ENCODE measurements at regions of chr6 and their contacts with region 1.

Region 1: DNA sequence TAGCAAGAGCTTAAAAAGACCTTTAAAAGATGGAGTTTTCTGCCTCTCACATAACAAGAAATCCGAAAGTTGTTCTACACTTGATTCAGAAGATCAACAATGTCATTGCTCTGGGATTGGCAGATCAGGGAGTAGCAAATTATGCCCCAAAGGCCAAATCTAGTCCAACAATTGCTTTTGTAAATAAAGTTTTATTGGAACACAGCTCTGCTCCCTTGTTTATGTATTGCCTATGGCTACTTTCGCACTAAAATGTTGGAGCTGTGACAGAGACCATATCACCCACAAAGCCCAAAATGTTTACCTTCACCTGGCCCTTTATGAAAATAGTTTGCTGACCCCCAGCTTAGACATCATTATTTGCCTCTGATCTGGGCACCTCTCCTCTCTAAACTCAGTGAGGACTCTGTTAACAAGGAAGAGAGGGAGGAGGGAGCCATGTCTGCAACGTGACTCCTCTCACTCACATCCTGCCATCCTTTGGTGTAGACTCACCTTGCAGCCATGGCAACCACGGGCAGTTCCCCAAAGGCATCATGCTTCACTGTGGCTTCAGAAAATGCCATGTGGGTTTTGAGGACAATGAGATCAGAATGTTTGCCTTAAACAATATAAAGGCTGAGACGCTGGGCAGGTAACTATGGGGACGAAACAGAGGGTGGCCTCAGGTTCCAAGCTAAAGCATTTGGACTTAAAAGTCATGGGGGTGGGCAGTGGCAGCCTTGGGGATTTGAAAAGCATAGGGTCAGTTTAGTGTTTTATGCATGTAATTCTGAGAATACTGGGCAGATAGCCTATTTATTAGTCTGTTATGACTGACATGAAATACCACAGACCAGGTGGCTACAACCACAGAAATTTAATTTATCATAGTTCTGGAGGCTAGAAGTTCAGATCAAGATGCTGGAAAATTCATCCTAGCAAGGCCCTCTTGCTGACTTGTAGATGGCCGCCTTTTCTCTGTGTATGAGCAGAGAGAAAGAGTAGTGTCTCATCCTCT is 149.7 kb upstream of the TNFAIP3 start:
- DNase-seq: peak; percentile 87 to 97 (median 91)
- H3K4me3 ChIP-seq: no peak overlapping the region
- H3K4me3 Mint-ChIP-seq: peak overlapping the region in 7 of 8 donors; percentile 30 to 80 (median 67)
- H3K27ac ChIP-seq: peak overlapping the region; percentile 83
- H3K27ac Mint-ChIP-seq: peak overlapping the region; percentile 93 to 100 (median 99)
- H3K4me1 ChIP-seq: peaks cover 42% of the 10 kb centered on the region
- H3K4me1 Mint-ChIP-seq: peaks cover 37 to 56% (median 46%) of the 10 kb centered on the region in 4 donors
- H3K27me3 ChIP-seq: no peaks in the 10 kb centered on the region
- H3K27me3 Mint-ChIP-seq: no peaks in the 10 kb centered on the region

Region 2: DNA sequence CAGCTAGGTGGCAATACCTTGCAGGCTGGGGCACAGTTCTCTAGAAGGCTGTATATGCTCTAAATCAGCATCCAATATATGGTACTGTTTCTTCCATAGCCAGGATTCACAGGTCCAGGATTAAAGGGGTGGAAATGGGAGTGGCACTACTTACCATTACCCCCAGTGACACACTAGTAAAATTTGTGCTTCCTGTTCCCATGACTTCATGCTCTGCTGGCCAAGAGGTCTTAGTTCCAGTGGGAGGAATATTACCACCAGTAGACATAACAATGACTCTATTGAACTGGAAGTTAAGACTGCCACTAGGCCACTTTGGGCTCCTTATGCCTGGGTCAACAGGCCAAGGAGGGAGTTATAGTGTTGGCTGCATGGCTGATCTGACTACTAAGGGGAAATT is 24.6 kb before region 1 on chr6:
- CTCF ChIA-PET with region 1: no interaction called
- POLR2A ChIA-PET with region 1: no interaction called
- intact Hi-C with region 1: no loop called
- DNase-seq: no peak
- H3K4me3 ChIP-seq: no peak overlapping the region
- H3K4me3 Mint-ChIP-seq: no peak overlapping the region
- H3K27ac ChIP-seq: no peak overlapping the region
- H3K27ac Mint-ChIP-seq: no peak overlapping the region
- H3K4me1 ChIP-seq: no peaks in the 10 kb centered on the region
- H3K4me1 Mint-ChIP-seq: peaks cover 0 to 4% (median 2%) of the 10 kb centered on the region in 4 donors
- H3K27me3 ChIP-seq: no peaks in the 10 kb centered on the region
- H3K27me3 Mint-ChIP-seq: peaks cover 2 to 7% of the 10 kb centered on the region in 2 donors

Region 3: GRCh38 chr6:137736048-137736818 is 18.9 kb after region 1 on chr6:
- CTCF ChIA-PET with region 1: interaction called, 3 read pairs
- POLR2A ChIA-PET with region 1: interaction called, 12 read pairs
- intact Hi-C with region 1: loop called (anchors 1 kb)
- DNase-seq: peak; percentile 45 to 71 (median 51)
- H3K4me3 ChIP-seq: no peak overlapping the region
- H3K4me3 Mint-ChIP-seq: peak overlapping the region in 6 of 8 donors; percentile 10 to 61 (median 48)
- H3K27ac ChIP-seq: peak overlapping the region; percentile 18
- H3K27ac Mint-ChIP-seq: peak overlapping the region; percentile 58 to 97 (median 91)
- H3K4me1 ChIP-seq: peaks cover 16% of the 10 kb centered on the region
- H3K4me1 Mint-ChIP-seq: peaks cover 10 to 14% (median 13%) of the 10 kb centered on the region in 4 donors
- H3K27me3 ChIP-seq: no peaks in the 10 kb centered on the region
- H3K27me3 Mint-ChIP-seq: no peaks in the 10 kb centered on the region

Region 4: DNA sequence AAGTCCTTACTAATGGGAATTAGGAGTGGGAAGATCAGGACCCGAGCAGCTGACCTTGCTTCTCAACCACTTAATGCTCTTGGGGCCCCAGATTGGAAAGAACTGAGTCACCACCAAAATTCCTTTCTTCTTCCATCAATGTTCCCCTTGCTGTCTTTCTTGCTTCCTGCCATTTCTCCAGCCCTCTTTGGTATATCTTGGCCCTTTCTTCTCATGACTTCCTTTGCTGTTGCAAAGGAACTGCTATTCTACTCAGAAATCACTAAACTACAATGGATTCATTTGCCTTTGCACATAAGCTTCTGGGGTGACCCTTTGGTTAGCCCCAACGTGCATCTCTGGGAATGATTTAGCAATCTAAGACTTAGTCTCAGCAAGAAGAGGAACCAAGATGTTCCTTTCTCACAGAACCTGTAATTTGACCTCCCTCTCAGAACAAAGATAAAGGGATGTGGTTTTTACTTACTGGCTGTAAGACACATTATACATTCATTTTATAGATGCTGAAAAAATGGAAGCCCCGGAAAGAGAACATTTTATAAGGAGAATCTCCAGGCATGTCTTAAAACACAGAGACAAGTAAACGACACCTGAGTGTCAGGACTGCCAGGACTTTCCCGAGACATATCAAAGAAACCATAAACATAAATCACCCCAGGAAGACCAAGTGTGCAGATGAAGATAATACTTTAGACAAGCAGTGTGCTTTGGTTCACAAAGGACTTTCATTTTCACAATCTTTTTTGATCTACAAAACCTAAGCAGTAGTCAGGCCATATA is 50.7 kb after region 1 on chr6:
- CTCF ChIA-PET with region 1: no interaction called
- POLR2A ChIA-PET with region 1: interaction called, 3 read pairs
- intact Hi-C with region 1: loop called (anchors 5 kb)
- DNase-seq: peak in 4 of 5 donors; percentile 23 to 42 (median 38)
- H3K4me3 ChIP-seq: no peak overlapping the region
- H3K4me3 Mint-ChIP-seq: peak overlapping the region; percentile 61 to 87 (median 80)
- H3K27ac ChIP-seq: peak overlapping the region; percentile 36
- H3K27ac Mint-ChIP-seq: peak overlapping the region; percentile 74 to 98 (median 96)
- H3K4me1 ChIP-seq: peaks cover 22% of the 10 kb centered on the region
- H3K4me1 Mint-ChIP-seq: peaks cover 11 to 39% (median 18%) of the 10 kb centered on the region in 4 donors
- H3K27me3 ChIP-seq: no peaks in the 10 kb centered on the region
- H3K27me3 Mint-ChIP-seq: no peaks in the 10 kb centered on the region

Region 5: DNA sequence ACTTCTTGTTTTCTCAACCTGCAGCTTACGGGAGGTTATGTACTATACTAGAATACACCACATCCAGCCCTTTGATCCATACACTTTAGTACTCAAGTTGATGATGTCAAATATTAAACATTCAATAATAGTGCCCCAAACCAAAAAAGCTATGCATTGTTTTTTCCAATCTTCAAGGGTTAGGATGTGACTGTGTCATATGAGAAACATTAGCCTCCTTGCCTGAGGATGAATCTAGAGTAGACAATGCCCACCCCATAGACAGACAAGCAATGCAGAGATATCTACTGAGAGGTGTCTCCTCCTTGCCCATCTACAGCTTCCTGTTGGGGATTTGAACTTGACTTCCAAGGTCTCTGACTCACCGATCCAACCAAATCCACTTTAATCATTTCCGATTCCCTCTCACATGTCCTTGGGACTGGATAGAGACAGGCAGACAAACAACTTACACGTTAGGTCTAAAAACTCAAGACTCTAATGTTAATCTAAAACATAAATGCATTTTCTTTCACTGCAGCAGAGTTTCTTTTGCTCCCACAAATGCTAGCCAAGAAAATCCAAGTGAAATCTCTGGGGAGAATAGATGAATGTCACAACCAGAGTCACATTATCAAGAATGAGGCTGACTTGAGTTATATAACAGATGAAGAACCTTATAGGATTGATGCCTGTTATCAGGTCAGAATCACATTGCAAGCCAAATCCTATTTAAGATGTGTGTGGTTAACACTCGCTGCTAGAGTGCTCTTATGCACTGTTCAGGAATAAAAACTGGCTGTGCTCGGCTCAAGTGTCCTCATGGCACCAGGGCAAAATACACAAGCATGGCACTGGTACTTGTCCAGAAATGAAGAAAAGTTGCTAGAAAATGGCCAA is 74.1 kb after region 1 on chr6:
- CTCF ChIA-PET with region 1: no interaction called
- POLR2A ChIA-PET with region 1: interaction called, 11 read pairs
- intact Hi-C with region 1: no loop called
- DNase-seq: peak in 1 of 5 donors; percentile 7
- H3K4me3 ChIP-seq: no peak overlapping the region
- H3K4me3 Mint-ChIP-seq: peak overlapping the region; percentile 28 to 76 (median 62)
- H3K27ac ChIP-seq: peak overlapping the region; percentile 37
- H3K27ac Mint-ChIP-seq: peak overlapping the region; percentile 59 to 88 (median 79)
- H3K4me1 ChIP-seq: peaks cover 52% of the 10 kb centered on the region
- H3K4me1 Mint-ChIP-seq: peaks cover 37 to 68% (median 53%) of the 10 kb centered on the region in 4 donors
- H3K27me3 ChIP-seq: no peaks in the 10 kb centered on the region
- H3K27me3 Mint-ChIP-seq: no peaks in the 10 kb centered on the region

Region 6: GRCh38 chr6:137823826-137824555 is 106.6 kb after region 1 on chr6:
- CTCF ChIA-PET with region 1: no interaction called
- POLR2A ChIA-PET with region 1: interaction called, 12 read pairs
- intact Hi-C with region 1: loop called (anchors 1 kb)
- DNase-seq: peak; percentile 92 to 99 (median 97)
- H3K4me3 ChIP-seq: no peak overlapping the region
- H3K4me3 Mint-ChIP-seq: peak overlapping the region; percentile 52 to 87 (median 77)
- H3K27ac ChIP-seq: peak overlapping the region; percentile 95
- H3K27ac Mint-ChIP-seq: peak overlapping the region; percentile 93 to 100 (median 100)
- H3K4me1 ChIP-seq: peaks cover 74% of the 10 kb centered on the region
- H3K4me1 Mint-ChIP-seq: peaks cover 44 to 75% (median 59%) of the 10 kb centered on the region in 4 donors
- H3K27me3 ChIP-seq: no peaks in the 10 kb centered on the region
- H3K27me3 Mint-ChIP-seq: no peaks in the 10 kb centered on the region

Measured in CD4-positive, alpha-beta memory T cell (primary cell).